Sigmoid colon (tissue), 7 donors: ENCODE measurements at regions of chr3 and their contacts with region 1.

Region 1: DNA sequence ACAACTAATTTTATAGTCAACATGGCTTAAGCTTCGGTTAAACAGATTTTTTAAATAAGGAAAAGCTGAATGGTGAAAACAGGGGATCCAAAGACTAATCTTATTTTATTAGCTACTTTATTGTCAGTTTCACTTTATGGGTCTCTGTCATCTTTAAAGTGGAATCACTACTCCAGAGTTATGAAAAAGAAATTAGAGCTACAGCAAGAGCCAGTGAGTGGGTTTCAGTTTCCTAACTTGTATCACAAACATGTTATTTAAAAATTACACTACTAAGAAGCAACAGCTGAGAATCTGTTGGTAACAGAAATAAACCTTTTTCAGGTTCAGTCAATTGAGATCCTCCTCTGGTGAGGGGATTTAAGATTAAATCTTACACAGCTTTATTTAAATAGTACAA is 10.0 kb downstream of the PHC3 start:
- DNase-seq: no peak
- H3K4me3 ChIP-seq: no peak overlapping the region
- H3K27ac ChIP-seq: no peak overlapping the region
- H3K4me1 ChIP-seq: peaks cover 0 to 49% (median 16%) of the 10 kb centered on the region in 4 donors
- H3K27me3 ChIP-seq: no peaks in the 10 kb centered on the region
- CTCF ChIP-seq: no peak
- EP300 ChIP-seq: no peak
- POLR2A ChIP-seq: no peak

Region 2: DNA sequence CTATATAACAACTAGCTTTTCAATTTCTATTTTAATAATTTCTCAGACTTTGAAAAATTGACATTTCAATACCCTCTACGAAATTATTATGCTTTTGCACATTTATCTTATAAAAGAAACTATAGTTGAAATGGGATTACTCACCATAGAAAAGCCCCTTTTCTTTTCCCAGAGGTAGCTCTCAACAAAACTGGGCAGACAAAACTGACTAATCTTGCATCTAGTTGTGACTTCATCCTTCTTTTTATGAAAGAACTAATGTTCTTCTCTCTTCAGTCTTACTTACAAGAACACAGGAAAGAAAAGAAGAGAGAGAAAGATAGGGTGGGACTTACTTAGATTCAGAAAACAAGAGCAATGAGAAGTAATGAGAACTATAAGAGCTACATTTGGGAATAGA is 72.8 kb before region 1 on chr3:
- intact Hi-C with region 1: loop called (anchors 5 kb)
- DNase-seq: no peak
- H3K4me3 ChIP-seq: no peak overlapping the region
- H3K27ac ChIP-seq: no peak overlapping the region
- H3K4me1 ChIP-seq: no peaks in the 10 kb centered on the region
- H3K27me3 ChIP-seq: no peaks in the 10 kb centered on the region
- CTCF ChIP-seq: no peak
- EP300 ChIP-seq: no peak
- POLR2A ChIP-seq: no peak